ENCODE measurements at regions of chr15 and their contacts with region 1.

Region 1: DNA sequence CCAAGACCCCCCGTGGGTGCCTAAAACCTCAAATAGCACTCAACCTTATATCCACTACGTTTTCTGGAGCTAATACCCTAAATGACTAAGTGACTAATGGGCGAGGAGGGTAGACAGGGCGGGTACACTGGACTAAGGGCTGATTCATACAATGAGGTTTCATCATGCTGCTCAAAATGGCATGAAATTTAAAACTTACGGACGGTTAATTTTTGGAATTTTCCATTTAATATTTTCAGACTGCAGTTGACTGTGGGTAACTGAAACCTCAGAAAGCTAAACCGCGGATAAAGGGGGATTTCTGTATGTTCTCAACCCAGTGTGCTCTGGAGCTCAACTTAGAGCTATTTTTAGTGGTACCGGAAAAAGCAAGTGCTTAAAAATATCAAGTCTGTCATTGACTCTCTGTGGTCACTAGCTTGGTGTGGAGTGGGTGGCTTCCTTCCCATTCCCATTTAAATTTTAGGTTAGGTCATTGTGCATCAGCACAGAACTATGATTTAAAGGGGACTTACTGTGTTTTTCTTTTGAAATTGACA is 72.9 kb downstream of the LRRC28 start:
- DNase-seq: peak; percentile 34 to 49
- ATAC-seq: peak; percentile 86
- H3K4me3 ChIP-seq: peak overlapping the region; percentile 16 to 35 (median 32)
- H3K27ac ChIP-seq: peak overlapping the region; percentile 76 to 83 (median 78)
- H3K4me1 ChIP-seq: peaks cover 46 to 51% of the 10 kb centered on the region in 2 donors
- H3K27me3 ChIP-seq: no peaks in the 10 kb centered on the region
- CTCF ChIP-seq: no peak
- POLR2A ChIP-seq: peak in 1 of 2 donors; percentile 19

Region 2: DNA sequence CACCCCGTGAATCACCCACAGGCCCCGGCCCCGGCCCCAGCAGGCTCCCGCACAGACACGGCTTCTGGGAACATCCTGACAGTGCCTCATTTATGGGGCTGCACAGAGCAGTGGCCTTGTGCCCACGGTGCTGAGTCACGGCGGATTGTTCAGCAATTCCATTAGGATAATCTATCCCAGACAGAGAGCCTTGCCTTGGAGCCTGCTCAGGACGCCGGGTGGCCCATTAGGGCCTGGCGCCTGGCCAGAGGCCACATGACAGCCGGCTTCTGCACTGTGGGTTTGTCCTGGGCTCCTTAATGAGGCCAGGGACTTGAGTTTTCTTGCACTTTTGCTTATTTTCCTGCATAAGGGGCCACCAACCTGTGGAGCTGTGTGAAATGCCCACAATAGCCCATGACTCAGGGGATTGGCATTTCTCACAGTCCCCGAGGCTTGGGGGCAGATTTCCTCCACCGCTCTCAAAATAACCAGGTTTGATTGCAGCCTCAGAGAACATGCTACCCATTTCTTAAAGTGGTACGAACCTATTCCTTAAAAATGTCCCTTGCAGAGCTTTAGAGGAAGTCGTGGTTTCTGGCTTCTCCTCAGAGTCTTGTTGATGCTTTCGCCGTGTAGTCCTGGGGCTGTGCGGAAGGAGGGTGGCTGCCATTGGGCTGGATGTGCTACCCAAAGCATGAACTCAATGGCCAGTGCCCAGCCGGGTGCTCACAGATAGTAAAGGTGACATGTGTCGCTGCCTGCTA is 200.3 kb before region 1 on chr15:
- in situ Hi-C with region 1: no loop called
- intact Hi-C with region 1: no loop called
- DNase-seq: peak; percentile 85 to 93
- ATAC-seq: peak; percentile 82 to 88
- H3K4me3 ChIP-seq: peak overlapping the region; percentile 33 to 59 (median 44)
- H3K27ac ChIP-seq: peak overlapping the region; percentile 88 to 97 (median 94)
- H3K4me1 ChIP-seq: peaks cover 89 to 91% of the 10 kb centered on the region in 2 donors
- H3K27me3 ChIP-seq: no peaks in the 10 kb centered on the region
- CTCF ChIP-seq: no peak
- POLR2A ChIP-seq: peak; percentile 40 to 52

Region 3: GRCh38 chr15:99305761-99306505 is 18.2 kb before region 1 on chr15:
- in situ Hi-C with region 1: no loop called
- intact Hi-C with region 1: loop called (anchors 2 kb)
- DNase-seq: peak; percentile 84 to 92
- ATAC-seq: peak; percentile 89 to 94
- H3K4me3 ChIP-seq: peak overlapping the region in 3 of 4 donors; percentile 36 to 44 (median 37)
- H3K27ac ChIP-seq: peak overlapping the region; percentile 76 to 85 (median 83)
- H3K4me1 ChIP-seq: peaks cover 46 to 53% of the 10 kb centered on the region in 2 donors
- H3K27me3 ChIP-seq: no peaks in the 10 kb centered on the region
- CTCF ChIP-seq: no peak
- POLR2A ChIP-seq: no peak